ENCODE measurements at regions of chr2 and their contacts with region 1.

Region 1: DNA sequence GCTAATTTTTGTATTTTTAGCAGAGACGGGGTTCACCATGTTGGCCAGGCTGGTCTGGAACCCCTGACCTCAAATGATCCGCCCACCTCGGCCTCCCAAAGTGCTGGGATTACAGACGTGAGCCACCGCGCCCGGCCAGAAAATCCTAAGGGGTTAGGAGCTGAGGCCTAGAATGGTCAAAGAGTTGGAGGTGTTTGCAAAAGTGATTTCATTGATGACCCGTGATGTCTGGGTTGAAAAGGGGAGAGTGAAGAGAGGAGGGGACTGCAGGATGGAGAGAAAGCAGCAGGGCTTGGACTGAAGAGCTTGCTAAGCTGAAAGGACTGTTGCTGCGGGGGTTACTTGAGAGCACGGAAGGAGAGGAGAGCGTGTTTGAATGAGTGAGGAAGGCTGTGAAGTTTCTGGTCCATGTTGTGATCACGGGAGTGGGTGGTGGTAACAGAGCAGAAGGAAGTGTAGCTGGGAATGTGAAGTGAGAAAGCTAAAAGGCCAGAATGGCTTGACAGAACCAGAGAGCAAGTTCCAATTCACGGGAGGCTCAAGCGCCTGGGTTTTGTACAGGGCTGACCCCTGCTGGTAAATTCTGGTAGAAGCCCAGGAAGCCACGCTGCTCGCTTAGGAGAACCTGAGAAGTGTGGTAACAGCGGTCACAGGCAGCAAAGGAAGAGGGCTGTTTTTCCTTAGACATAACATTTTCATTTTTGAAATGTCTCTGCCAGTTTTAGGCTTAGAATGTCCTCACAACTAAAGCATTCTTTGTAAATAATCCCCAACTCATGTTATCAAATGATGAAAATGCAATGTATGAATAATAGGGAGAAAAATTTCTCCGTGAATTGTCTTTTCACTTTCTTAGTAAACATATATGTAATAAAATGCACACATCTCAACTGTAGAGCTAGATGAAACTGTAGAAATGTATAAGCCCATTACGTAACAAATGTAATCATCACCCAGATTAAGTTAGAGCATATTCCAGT is 40.5 kb upstream of the ACTR2 start:
- DNase-seq: peak; percentile 83 to 88
- ATAC-seq: peak; percentile 98 to 99
- H3K4me3 ChIP-seq: no peak overlapping the region
- H3K27ac ChIP-seq: no peak overlapping the region
- H3K4me1 ChIP-seq: 0 out of 3 replicates have a peak, but pooled peaks cover 4% of the 10 kb centered on the region
- CTCF ChIP-seq: peak; percentile 90
- EP300 ChIP-seq: no peak
- POLR2A ChIP-seq: no peak
- RAD21 ChIP-seq: peak; percentile 86 to 91

Region 2: GRCh38 chr2:65070172-65070830 is 116.9 kb before region 1 on chr2:
- CTCF ChIA-PET with region 1: interaction called, 69 read pairs
- POLR2A ChIA-PET with region 1: no interaction called
- DNase-seq: peak in 1 of 2 experiments; percentile 50
- ATAC-seq: peak; percentile 44 to 62
- H3K4me3 ChIP-seq: no peak overlapping the region
- H3K27ac ChIP-seq: peak overlapping the region; percentile 3 to 58; a peak in 4 of 6 replicates
- H3K4me1 ChIP-seq: peaks cover 36% of the 10 kb centered on the region
- CTCF ChIP-seq: no peak
- EP300 ChIP-seq: no peak
- POLR2A ChIP-seq: no peak
- RAD21 ChIP-seq: no peak

Region 3: DNA sequence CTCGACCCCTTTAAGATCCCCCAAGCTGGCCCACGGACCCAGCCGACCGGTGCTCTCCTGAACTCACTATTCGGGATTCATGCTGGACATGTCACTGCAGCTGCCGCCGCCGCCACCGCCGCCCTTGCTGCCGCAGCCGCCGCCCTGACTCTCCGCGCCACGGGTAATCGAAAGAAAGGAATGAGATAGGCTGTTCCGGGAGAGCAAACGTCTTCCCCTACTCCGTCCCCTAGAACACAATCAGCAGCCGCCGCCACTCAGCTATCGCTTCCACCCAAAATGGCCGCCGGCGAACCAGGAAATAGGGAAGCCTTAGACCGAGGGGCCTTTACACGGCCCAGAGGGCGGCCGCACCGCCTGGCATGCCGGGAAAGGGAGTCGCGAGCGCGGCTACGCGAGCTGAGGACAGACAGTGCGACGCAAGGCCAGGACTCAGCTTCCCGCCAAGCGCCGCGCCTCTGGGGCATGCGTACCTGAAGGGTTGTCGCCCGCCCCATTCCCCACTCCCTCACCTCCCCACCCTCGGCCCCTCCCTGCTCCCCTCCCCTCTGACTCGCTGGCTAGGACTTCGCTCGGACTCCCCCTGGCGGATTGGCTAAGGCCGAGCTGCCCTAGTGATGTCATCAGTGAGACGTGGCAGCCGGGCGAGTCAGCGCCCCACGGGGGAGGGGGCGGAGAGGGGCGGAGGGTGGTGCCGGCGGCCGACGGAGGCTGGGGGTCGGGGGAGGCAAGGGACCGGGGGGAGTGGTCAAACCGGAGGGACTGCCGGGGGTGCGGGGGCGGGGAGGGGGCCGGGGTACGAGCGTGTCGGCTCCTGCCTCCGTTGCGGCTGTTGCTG is 57.1 kb before region 1 on chr2 and contains the start of gene RAB1A:
- CTCF ChIA-PET with region 1: interaction called, 29 read pairs
- POLR2A ChIA-PET with region 1: interaction called, 5 read pairs
- DNase-seq: peak; percentile 96 to 100
- ATAC-seq: peak; percentile 91 to 97
- H3K4me3 ChIP-seq: peak within 1 kb of the TSS; percentile 85
- H3K27ac ChIP-seq: peak within 1 kb of the TSS; percentile 95
- H3K4me1 ChIP-seq: peaks cover 42% of the 10 kb centered on the region
- CTCF ChIP-seq: peak; percentile 42
- EP300 ChIP-seq: no peak
- POLR2A ChIP-seq: peak; percentile 78
- RAD21 ChIP-seq: peak in 1 of 2 experiments; percentile 46; a peak in 2 of 5 replicates
- polyA plus RNA-seq, gene RAB1A: 351 and 417 TPM in 2 replicates

Region 4: GRCh38 chr2:65198737-65199136 is 11.6 kb after region 1 on chr2:
- CTCF ChIA-PET with region 1: interaction called, 17 read pairs
- POLR2A ChIA-PET with region 1: no interaction called
- DNase-seq: no peak
- ATAC-seq: no peak
- H3K4me3 ChIP-seq: no peak overlapping the region
- H3K27ac ChIP-seq: no peak overlapping the region
- H3K4me1 ChIP-seq: no peaks in the 10 kb centered on the region
- CTCF ChIP-seq: no peak
- EP300 ChIP-seq: no peak
- POLR2A ChIP-seq: no peak
- RAD21 ChIP-seq: no peak

Region 5: GRCh38 chr2:65220432-65221131 is 33.4 kb after region 1 on chr2:
- CTCF ChIA-PET with region 1: interaction called, 10 read pairs
- POLR2A ChIA-PET with region 1: no interaction called
- DNase-seq: no peak
- ATAC-seq: no peak
- H3K4me3 ChIP-seq: no peak overlapping the region
- H3K27ac ChIP-seq: no peak overlapping the region
- H3K4me1 ChIP-seq: no peaks in the 10 kb centered on the region
- CTCF ChIP-seq: no peak
- EP300 ChIP-seq: no peak
- POLR2A ChIP-seq: no peak
- RAD21 ChIP-seq: no peak